Psoas muscle (tissue), 8 donors: ENCODE measurements at regions of chr18 and their contacts with region 1.

Region 1: DNA sequence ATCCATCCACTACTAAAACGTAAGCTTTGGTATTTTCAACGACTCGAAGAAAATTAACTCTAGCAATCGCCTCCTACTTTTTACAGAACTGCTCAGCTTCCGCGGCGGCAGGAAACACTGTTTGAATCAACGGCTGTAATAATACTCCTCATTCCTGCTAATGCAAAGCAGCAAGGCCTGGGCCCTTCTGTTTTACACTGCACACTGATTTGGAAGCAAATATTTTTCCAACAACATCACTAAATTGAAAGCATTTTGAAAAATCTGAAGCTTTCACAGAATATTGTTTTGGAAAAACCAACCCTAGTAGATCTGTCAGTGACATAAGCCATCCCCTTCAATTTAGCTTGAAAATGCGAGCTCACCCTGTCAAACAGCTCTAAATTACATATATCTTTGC is 261.2 kb downstream of the TXNL1 start:
- DNase-seq: no peak
- ATAC-seq: no peak
- H3K4me3 ChIP-seq: no peak overlapping the region
- H3K27ac ChIP-seq: no peak overlapping the region
- H3K4me1 ChIP-seq: no peaks in the 10 kb centered on the region
- H3K27me3 ChIP-seq: peaks cover 0 to 6% (median 0%) of the 10 kb centered on the region in 3 donors
- CTCF ChIP-seq: no peak

Region 2: GRCh38 chr18:54752185-54752584 is 1625.0 kb before region 1 on chr18:
- intact Hi-C with region 1: no loop called
- DNase-seq: no peak
- ATAC-seq: no peak
- H3K4me3 ChIP-seq: no peak overlapping the region
- H3K27ac ChIP-seq: no peak overlapping the region
- H3K4me1 ChIP-seq: no peaks in the 10 kb centered on the region
- H3K27me3 ChIP-seq: peaks cover 0 to 5% (median 0%) of the 10 kb centered on the region in 3 donors
- CTCF ChIP-seq: no peak

Region 3: GRCh38 chr18:56431551-56431950 is 54.3 kb after region 1 on chr18:
- intact Hi-C with region 1: loop called in 1 of 2 experiments (anchors 2 kb)
- DNase-seq: no peak
- ATAC-seq: no peak
- H3K4me3 ChIP-seq: no peak overlapping the region
- H3K27ac ChIP-seq: no peak overlapping the region
- H3K4me1 ChIP-seq: no peaks in the 10 kb centered on the region
- H3K27me3 ChIP-seq: no peaks in the 10 kb centered on the region
- CTCF ChIP-seq: no peak